ENCODE measurements at regions of chr4 and their contacts with region 1.

Region 1: DNA sequence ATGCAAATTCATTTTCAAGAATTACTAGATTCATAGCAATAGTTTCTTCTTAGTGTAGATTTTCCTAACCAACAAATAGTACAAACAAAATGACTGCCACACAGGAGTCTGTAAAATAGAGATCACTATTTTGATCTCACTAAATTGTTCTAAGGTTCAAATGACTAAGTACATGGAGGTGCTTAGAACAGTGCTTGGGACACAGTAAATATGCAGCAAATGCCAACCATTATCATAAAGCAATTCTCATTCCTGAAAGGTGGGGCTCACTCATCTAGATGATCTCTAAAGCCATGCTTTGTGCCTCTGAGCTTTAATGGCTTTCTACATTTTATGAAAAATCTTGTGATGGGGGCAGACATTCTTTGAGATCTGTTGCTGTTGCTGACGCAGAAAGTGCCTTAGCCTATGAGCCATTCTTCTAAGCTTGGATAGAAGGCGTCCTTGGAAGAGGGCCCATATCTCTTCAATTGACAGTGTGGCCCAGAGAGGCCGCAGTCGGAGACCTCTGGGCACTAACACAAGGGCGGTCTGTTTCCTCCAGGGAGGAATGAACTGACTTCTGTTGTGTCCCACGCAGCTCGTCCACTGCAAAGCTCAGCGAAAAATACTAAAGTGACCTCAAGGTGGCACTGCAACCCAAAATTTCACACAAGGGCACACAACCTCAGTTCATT is 23.5 kb downstream of the TLR10 start:
- DNase-seq: peak; percentile 39

Region 2: DNA sequence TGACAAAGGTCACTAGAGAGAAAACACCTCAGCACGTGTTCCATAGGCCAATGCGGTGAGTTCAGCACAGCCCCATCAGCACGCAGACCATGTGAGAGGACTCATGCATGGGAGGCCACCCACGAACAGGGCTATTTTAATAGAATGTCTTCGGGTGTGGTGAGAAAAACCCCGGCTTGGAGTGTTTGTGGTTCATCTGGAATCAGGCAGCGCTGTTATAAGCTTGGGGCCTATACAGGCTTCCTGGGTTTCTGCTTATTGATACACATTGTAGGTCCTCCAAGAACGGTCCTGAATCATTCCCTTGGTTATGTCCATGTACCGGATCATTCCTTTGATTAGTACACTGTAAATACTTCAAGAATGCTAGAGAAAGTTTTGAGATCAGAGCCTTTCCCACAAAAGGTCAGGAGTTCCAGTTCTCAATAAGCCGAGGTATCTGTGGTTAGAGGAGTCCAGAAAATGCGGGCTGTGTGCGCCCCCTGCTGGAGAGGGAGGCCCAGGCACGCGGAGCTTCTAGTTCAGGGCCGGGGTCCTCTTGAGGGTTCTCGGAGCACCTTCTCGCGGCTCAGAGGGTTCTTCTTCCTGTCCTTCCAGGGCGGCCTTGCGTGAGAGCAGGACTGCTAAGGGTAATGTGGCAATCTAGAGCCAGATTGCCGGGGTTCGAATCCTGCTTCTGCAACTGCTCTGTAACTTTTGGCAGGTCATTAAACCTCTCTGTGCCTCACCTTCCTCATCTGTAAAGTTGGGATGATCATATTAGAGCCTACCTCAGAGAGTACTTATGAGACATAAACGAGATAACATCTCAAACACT is 28.2 kb before region 1 on chr4:
- CTCF ChIA-PET with region 1: no interaction called
- POLR2A ChIA-PET with region 1: no interaction called
- DNase-seq: peak; percentile 67

Region 3: DNA sequence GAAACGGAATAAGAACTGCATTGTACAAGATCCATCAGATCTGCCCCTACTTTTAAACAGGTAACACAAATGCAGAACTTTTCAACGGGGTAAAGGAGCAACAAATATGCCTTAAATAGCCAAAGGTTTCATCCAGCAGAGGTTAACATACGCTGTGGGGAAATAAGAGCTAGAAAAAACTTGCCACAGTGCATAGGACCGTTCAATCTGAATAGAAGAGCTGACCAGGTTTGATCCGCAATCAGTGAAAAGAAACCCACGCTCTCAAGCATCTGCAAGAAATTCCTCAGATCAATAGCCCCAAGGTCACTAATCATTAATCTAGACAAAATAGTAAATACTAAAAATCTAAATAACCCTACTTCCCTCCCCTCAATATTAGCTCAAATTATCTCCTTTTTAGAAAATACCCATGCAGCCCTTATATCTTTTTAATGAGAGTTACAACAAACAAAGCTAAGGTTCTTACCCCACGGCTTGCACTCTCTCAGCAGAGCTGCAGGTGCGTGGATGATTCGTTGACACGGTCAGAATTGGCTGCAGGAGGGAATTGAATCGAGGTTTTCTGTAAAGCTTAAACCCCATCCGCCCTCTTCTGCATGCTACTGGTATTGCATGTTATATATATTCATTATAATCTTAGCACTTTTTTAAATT is 23.3 kb after region 1 on chr4 and contains the start of gene TLR10:
- CTCF ChIA-PET with region 1: interaction called, 23 read pairs
- POLR2A ChIA-PET with region 1: no interaction called
- DNase-seq: peak; percentile 23

Region 4: DNA sequence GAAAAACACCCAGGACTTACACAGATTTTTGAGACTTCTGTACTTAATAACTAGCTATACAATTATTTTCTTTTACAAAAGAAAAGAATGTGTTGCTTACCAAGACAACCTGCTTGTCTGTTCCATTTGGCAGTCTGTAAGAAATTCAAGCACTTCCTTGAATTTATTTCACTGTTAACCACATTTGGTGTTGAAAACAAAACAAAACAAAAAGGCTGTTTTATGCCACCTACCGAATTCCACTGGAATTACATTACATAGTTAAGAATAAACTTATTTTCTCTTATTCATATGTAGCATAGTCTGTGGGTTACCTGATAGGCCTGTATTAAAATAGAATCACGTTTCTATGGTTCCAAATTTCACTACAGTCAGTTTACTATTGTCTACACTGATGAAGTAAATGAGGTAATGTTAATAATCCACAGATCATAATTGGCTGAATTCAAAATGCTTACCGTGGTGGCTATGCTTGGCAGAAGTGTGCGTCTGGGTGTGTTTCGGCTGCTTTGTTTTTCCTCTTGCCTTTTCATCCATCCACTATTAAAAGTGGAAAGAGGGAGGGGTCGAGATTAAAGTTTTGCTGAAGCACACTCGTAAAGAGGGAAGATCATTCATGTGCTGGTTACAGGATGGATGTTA is 45.5 kb after region 1 on chr4 and contains the start of gene TLR1:
- CTCF ChIA-PET with region 1: interaction called, 17 read pairs
- POLR2A ChIA-PET with region 1: no interaction called
- DNase-seq: no peak

Region 5: GRCh38 chr4:38860788-38861424 is 101.7 kb after region 1 on chr4:
- CTCF ChIA-PET with region 1: interaction called, 21 read pairs
- POLR2A ChIA-PET with region 1: no interaction called
- DNase-seq: peak; percentile 39